Head of caudate nucleus (tissue), 42 donors: ENCODE measurements at regions of chr12 and their contacts with region 1.

Region 1: DNA sequence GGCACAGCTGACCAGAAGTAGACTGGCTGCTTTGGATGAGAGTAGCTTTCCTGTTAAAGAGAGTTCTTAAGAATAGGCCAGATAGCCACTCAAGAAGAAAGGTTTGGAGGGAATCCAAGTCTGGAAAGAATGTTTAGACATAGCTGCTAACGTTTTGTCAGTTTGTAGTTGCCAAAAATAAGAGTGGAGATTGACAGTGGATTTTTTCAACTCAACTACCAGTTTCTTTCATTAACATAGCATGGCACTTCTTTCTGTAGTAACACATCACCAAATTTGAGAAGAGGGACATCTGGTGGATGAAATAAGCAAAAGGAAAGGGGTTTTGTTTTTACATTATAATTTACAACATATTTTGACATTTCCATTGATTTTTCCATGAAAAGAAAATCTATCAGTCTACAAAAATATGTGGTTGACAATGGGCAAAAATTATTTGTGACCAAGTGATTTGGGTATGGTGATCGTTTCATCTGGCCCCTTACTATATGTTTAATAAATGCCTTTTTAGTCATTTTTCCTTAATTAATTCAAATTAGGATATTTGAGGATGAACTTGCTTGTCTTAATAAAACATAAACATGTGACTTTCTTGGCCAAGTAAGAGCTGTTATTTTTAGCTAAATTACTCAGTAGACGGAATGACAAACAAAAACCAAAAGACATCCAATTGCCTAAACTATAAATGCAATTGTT is 71.1 kb downstream of the PTPRR start:
- DNase-seq: peak in 1 of 42 donors; percentile 30

Region 2: DNA sequence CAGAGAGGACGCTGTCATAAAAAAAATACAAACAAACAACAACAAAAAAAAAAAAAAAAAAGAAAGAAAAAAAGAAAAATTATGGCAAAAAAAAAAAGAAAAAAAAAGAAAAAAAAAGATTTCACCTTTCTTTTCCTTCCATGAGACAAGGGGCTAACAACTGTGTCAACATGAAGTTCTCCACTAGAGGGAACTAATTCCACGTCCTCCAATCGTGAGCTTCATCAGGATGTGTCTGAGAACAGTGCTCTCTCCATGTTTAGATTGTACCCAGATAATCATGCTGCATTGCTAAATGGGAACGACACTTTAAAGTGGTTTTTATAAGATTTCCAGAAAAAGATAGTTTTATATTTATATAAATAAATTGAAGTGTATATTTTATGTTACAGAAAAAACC is 116.0 kb before region 1 on chr12:
- intact Hi-C with region 1: loop called (anchors 5 kb)
- DNase-seq: peak in 28 of 42 donors; percentile 15 to 85 (median 59)